ENCODE measurements at regions of chr3 and their contacts with region 1.

Region 1: GRCh38 chr3:58167431-58168351 is 43.1 kb downstream of the DNASE1L3 start:
- DNase-seq: peak; percentile 54
- H3K4me3 Mint-ChIP-seq: no peak overlapping the region
- H3K27ac Mint-ChIP-seq: no peak overlapping the region
- H3K4me1 Mint-ChIP-seq: peaks cover 4% of the 10 kb centered on the region
- H3K27me3 Mint-ChIP-seq: no peaks in the 10 kb centered on the region
- CTCF ChIP-seq: peak; percentile 67

Region 2: GRCh38 chr3:57604971-57605370 is 562.7 kb before region 1 on chr3:
- CTCF ChIA-PET with region 1: no interaction called
- POLR2A ChIA-PET with region 1: no interaction called
- intact Hi-C with region 1: no loop called
- DNase-seq: no peak
- H3K4me3 Mint-ChIP-seq: no peak overlapping the region
- H3K27ac Mint-ChIP-seq: no peak overlapping the region
- H3K4me1 Mint-ChIP-seq: no peaks in the 10 kb centered on the region
- H3K27me3 Mint-ChIP-seq: no peaks in the 10 kb centered on the region
- CTCF ChIP-seq: no peak

Region 3: DNA sequence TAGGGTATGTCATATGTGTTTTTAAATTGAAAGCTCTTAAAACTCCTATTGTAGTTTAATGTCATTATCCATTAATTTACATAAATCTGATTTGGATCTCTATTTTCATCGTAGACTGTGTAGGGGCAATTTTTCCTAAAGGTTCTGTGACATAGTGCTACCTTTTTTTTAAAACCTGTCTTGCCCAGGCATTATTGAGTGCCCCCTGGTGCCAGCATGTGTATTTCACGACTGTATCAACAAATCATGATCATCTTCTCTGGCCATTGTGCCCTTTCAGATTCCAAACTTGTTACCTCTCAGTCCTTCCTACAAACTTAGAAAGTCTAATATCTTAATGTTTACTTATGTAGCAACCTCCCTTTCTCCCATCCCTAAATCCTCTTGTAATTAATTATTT is 256.7 kb before region 1 on chr3:
- CTCF ChIA-PET with region 1: no interaction called
- POLR2A ChIA-PET with region 1: no interaction called
- intact Hi-C with region 1: no loop called
- DNase-seq: peak; percentile 40
- H3K4me3 Mint-ChIP-seq: no peak overlapping the region
- H3K27ac Mint-ChIP-seq: no peak overlapping the region
- H3K4me1 Mint-ChIP-seq: peaks cover 11% of the 10 kb centered on the region
- H3K27me3 Mint-ChIP-seq: no peaks in the 10 kb centered on the region
- CTCF ChIP-seq: peak; percentile 24

Region 4: DNA sequence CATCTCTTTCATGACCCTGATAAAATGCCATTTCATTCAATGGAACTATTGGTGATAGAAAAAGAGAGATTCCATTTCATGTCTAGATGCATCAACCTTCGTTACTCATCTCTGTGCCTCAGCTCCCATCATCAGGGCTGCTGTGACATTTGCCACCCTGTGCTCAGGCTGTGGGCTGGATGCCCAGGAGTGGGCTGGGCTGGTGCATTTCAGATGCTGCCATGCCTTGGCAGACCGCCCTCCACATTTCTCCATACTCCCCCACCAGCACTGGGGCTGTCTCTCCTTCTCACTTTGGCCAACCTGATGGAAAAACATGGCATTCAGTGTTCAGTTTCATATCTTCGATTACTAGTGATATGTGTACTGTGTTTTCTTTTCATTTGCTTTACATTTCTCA is 16.1 kb before region 1 on chr3:
- CTCF ChIA-PET with region 1: interaction called, 26 read pairs
- POLR2A ChIA-PET with region 1: interaction called, 3 read pairs
- intact Hi-C with region 1: no loop called
- DNase-seq: no peak
- H3K4me3 Mint-ChIP-seq: no peak overlapping the region
- H3K27ac Mint-ChIP-seq: no peak overlapping the region
- H3K4me1 Mint-ChIP-seq: no peaks in the 10 kb centered on the region
- H3K27me3 Mint-ChIP-seq: no peaks in the 10 kb centered on the region
- CTCF ChIP-seq: no peak